ENCODE measurements at regions of chr18 and their contacts with region 1.

Region 1: DNA sequence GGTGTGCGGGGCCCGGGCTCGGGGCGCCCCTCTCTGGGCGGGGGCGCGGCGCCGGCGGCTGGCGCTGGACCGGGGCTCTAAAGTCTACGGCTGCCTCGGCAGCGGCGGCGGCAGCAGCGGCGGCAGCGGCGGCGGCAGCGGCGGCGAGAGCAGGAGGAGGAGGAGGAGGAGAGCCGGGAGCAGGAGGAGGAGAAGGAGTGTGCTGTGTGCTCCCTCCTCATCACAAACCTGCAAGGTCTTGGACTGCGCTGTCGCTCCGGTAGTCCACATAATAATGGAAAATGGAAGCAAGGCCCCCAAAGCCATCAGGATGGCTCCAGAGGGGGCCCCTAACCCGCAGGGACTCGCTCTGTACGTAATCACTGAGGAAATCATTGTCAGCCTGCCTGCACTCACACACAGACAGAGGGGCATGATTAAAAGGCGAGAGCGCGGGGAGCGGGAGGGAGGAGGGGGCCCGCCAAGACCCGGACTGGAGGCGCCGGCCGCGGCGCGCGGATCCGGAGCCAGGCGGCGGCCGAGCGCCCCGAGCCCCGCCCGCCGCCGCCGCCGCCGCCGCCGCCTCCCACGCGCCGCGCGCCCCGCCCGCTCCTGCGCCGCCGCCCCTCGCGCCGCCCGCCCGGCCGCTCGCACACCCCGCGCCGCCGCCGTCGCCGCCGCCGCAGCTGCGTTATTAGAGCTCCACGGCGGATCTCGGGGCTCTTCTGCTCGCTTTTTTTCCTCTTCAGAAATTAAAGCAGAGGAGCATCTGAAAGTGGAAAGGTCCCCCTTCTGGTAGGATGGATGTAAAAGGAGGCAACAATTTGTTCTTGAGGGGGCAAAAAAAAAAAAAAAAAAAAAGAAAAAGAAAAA is at the start of gene ZNF521:
- DNase-seq: peak; percentile 78
- H3K4me3 ChIP-seq: peak within 1 kb of the TSS; percentile 59 to 85 (median 67)
- H3K27ac ChIP-seq: peak within 1 kb of the TSS; percentile 74 to 87 (median 86)
- H3K4me1 ChIP-seq: peaks cover 0 to 23% (median 12%) of the 10 kb centered on the region in 4 donors
- H3K27me3 ChIP-seq: peaks cover 85% of the 10 kb centered on the region
- CTCF ChIP-seq: peak in 1 of 5 experiments; percentile 14
- EP300 ChIP-seq: no peak
- POLR2A ChIP-seq: peak; percentile 34
- total RNA-seq, gene ZNF521: 6.4 to 29.5 (median 9.0) TPM

Region 2: DNA sequence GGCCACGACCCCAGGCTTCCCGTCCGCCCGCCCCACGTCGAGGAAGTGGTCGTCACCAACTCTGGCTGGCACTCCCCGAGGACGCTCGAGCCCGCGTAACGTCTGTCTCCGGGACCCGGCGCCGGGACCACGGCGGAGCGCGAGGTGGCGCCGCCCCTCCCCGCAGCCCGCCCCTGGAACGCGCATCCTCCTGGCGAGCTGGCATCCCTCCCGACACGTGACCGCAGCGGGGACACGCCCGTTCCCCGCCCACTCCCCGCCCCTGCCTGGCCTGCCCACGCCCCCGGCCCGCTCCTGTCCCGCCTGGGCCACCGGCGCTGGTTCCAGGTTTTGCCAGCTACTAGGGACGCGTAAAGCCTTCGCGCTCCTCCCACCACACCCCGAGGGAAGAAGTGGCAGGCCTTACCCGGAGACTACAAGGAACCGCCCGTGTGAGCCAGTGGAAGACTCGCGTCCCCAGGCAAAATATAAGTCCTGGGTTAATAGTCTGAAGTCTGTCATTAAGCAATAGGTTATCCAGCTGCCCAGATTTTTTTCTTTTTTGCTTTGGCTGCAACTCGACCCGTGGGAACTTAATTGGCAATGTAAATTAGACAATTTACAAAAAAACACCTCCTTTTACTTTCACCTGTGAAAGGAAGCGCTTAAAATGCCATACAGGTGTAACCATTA is 954.2 kb before region 1 on chr18 and contains the start of gene OSBPL1A:
- in situ Hi-C with region 1: no loop called
- intact Hi-C with region 1: loop called (anchors 5 kb)
- DNase-seq: peak; percentile 96
- H3K4me3 ChIP-seq: peak within 1 kb of the TSS; percentile 65 to 81 (median 70)
- H3K27ac ChIP-seq: peak within 1 kb of the TSS; percentile 85 to 91 (median 88)
- H3K4me1 ChIP-seq: peaks cover 0 to 15% (median 9%) of the 10 kb centered on the region in 4 donors
- H3K27me3 ChIP-seq: no peaks in the 10 kb centered on the region
- CTCF ChIP-seq: no peak
- EP300 ChIP-seq: no peak
- POLR2A ChIP-seq: peak; percentile 63
- total RNA-seq, gene OSBPL1A: 16.1 to 80.0 (median 61.4) TPM

Region 3: GRCh38 chr18:25262920-25263319 is 89.1 kb before region 1 on chr18:
- in situ Hi-C with region 1: loop called in 1 of 4 experiments (anchors 25 kb)
- intact Hi-C with region 1: no loop called
- DNase-seq: no peak
- H3K4me3 ChIP-seq: no peak overlapping the region
- H3K27ac ChIP-seq: no peak overlapping the region
- H3K4me1 ChIP-seq: no peaks in the 10 kb centered on the region
- H3K27me3 ChIP-seq: no peaks in the 10 kb centered on the region
- CTCF ChIP-seq: no peak
- EP300 ChIP-seq: no peak
- POLR2A ChIP-seq: no peak

Region 4: DNA sequence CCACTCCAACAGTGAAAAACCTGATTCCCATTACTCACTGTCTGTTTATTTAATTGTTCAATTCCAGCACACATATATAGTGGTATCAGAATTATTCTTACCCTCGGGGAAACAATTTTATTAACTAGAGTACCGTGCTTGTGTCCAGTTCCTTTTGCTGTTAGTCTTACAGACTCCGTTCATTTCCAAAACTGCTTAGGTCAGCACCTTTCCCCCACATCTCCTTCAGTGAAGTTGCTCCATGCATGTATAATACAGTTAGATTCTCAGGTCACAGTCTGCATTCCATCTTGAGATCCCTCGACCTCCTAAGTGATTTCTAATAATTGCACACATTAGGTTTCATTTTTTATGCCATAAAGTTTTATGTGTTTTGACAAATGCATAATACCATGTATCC is 56.3 kb after region 1 on chr18:
- in situ Hi-C with region 1: no loop called
- intact Hi-C with region 1: no loop called
- DNase-seq: no peak
- H3K4me3 ChIP-seq: no peak overlapping the region
- H3K27ac ChIP-seq: no peak overlapping the region
- H3K4me1 ChIP-seq: no peaks in the 10 kb centered on the region
- H3K27me3 ChIP-seq: no peaks in the 10 kb centered on the region
- CTCF ChIP-seq: no peak
- EP300 ChIP-seq: no peak
- POLR2A ChIP-seq: no peak

Region 5: GRCh38 chr18:25503567-25504081 is 151.6 kb after region 1 on chr18:
- in situ Hi-C with region 1: no loop called
- intact Hi-C with region 1: loop called (anchors 10 kb)
- DNase-seq: peak; percentile 57
- H3K4me3 ChIP-seq: peak overlapping the region; percentile 2 to 51 (median 26)
- H3K27ac ChIP-seq: peak overlapping the region in 3 of 4 donors; percentile 18 to 40 (median 40)
- H3K4me1 ChIP-seq: peaks cover 0 to 8% (median 0%) of the 10 kb centered on the region in 4 donors
- H3K27me3 ChIP-seq: no peaks in the 10 kb centered on the region
- CTCF ChIP-seq: no peak
- EP300 ChIP-seq: no peak
- POLR2A ChIP-seq: no peak

Measured in transverse colon (tissue), 4 donors.